Caco-2 (cell line): ENCODE measurements at regions of chr2 and their contacts with region 1.

Region 1: DNA sequence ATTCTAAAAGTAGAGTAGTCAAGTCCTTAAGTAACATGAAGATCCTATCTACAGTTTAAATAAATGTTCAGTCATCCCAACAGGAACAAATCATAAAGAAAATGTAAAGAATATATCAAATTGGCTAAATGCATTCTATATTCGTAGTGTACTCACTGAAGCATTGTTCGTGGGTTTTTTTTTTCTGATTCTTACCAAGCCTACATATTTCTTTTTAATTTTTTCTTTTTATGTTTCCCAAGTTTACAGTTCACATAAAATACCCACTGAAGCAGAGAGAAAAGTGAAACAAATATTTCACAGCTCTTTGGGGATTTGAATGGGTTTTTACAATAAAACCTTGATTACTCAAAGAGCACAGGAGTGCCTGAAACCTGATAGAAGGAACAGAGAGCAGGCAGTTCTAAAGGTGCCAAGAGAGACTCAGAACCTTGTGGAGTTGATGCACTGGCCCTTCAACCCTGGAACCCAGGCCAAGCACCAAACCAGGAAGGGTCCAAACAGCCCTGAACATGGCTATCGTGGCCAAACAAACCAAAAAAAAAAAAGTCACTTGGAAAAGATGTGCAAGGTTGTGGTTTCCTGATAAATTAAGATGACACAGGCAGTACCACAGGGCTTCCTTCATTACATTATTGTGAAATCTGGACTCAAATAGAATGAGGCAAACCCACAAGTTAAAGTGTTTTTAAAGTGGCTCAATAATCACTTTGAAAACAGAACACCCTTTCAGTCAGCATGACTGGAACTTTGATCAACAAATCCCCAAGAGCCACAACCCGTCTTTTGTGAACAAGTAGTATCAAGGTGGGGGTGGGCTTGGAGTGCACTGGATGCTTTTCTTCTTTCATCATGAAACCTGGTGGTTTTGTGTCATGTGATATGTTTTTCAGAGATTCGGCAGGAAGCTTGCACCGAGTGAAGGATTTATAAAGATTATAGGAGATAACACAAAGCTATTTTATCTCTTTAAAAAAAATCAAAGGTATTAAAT is 245.0 kb upstream of the FN1 start:
- DNase-seq: peak; percentile 85 to 92
- H3K4me3 ChIP-seq: no peak overlapping the region
- H3K4me3 Mint-ChIP-seq: peak overlapping the region; percentile 48
- H3K27ac Mint-ChIP-seq: peak overlapping the region; percentile 93
- H3K4me1 ChIP-seq: peaks cover 61% of the 10 kb centered on the region
- H3K4me1 Mint-ChIP-seq: peaks cover 56% of the 10 kb centered on the region
- H3K27me3 ChIP-seq: no peaks in the 10 kb centered on the region
- H3K27me3 Mint-ChIP-seq: no peaks in the 10 kb centered on the region
- CTCF ChIP-seq: no peak

Region 2: DNA sequence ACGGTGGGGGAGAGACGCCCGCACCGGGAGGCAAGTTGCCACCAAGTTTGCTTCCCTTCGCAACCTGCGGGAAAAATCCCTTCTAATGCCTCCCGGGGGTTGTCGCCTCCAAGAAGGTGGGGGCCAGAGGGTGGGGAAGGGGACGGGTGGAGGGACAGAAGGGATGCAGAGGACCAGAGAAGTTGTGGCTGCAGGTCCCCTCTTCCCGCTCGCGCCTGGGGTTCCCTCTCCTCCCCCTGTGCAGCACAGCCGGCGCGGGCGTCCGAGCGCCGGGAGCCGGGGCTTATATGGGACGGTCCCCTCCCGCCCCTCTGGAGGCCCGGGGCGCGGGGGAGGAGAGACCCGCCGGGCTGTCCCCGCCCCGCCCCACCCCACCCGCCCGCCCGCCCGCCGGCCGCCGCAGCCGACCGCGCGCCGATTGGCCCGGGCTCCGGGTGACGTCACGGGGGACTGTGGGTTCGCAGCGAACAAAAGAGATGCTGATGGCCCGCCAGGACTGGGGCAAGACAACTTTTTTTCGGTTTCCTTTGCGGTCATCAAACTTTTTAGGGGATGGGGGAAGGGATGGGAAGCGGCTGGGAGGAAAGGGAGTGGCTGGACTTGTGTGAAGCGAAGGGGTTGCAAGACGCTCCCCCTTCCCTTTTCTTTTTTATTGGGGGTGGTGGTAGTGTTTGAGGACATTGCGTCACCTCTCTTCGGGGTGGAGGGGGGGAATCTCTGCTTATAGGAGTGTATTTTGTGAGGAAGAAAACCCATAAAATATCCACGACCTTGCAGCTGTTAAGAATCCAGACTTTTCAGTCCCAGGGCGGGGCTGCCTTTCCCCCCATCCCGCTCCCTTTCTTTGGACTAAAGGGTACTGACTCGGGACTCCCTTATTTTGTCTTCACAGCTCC is 244.8 kb before region 1 on chr2 and contains the start of gene FN1:
- CTCF ChIA-PET with region 1: no interaction called
- POLR2A ChIA-PET with region 1: no interaction called
- intact Hi-C with region 1: loop called (anchors 1 kb)
- DNase-seq: peak; percentile 95 to 96
- H3K4me3 ChIP-seq: peak within 1 kb of the TSS; percentile 99
- H3K4me3 Mint-ChIP-seq: peak within 1 kb of the TSS; percentile 84
- H3K27ac Mint-ChIP-seq: peak within 1 kb of the TSS; percentile 94
- H3K4me1 ChIP-seq: peaks cover 40% of the 10 kb centered on the region
- H3K4me1 Mint-ChIP-seq: peaks cover 26% of the 10 kb centered on the region
- H3K27me3 ChIP-seq: no peaks in the 10 kb centered on the region
- H3K27me3 Mint-ChIP-seq: no peaks in the 10 kb centered on the region
- CTCF ChIP-seq: no peak
- total RNA-seq, gene FN1: 3,805 and 3,872 TPM in 2 replicates

Region 3: DNA sequence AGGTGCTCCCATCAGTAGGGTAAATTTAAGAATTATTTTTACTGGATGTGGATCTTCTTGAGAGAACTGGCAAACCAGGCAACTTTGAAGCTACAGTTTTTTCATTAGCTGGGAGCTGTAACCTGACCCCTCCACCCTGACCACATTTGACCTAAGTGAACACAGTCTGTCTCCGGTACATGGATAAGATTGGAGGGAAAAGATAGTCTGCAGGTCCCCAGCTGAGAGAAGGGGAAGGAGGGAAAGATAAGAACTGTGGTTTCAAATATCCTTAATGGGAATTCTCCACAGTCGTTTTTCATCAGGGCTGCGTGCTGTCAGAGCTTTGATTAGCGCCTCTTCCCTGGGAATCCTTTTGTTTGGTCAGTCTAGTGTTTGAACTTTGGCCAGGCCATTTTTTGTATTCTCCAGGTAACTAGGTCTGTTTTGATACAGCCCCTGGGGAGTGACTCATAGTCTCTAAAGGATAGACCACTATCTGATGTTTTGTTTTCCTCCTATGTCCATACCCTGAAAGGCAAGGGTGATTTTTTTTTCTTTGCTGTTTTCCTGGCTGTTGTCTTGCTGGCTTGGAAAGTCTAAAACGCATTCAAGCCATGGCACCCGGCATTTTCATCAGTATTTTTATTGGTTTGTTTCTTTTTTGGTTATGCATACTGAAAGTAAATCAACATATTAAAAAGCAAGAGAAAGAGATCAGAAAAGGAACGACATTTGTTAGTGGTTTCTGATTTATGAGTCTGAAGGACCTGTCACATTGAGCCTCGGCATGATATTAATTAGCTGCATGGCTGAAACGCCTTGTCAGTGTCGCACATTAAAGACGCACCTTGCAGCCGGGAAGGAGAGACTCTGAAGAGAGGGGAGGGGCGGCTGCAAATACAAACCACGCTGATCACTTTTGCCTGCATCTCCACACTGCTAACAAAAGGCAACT is 61.6 kb before region 1 on chr2:
- CTCF ChIA-PET with region 1: no interaction called
- POLR2A ChIA-PET with region 1: no interaction called
- intact Hi-C with region 1: loop called (anchors 1 kb)
- DNase-seq: peak; percentile 89 to 94
- H3K4me3 ChIP-seq: peak overlapping the region; percentile 10; the same call in 1 of the 2 replicates
- H3K4me3 Mint-ChIP-seq: peak overlapping the region; percentile 68
- H3K27ac Mint-ChIP-seq: peak overlapping the region; percentile 95
- H3K4me1 ChIP-seq: peaks cover 58% of the 10 kb centered on the region
- H3K4me1 Mint-ChIP-seq: peaks cover 50% of the 10 kb centered on the region
- H3K27me3 ChIP-seq: no peaks in the 10 kb centered on the region
- H3K27me3 Mint-ChIP-seq: no peaks in the 10 kb centered on the region
- CTCF ChIP-seq: no peak

Region 4: DNA sequence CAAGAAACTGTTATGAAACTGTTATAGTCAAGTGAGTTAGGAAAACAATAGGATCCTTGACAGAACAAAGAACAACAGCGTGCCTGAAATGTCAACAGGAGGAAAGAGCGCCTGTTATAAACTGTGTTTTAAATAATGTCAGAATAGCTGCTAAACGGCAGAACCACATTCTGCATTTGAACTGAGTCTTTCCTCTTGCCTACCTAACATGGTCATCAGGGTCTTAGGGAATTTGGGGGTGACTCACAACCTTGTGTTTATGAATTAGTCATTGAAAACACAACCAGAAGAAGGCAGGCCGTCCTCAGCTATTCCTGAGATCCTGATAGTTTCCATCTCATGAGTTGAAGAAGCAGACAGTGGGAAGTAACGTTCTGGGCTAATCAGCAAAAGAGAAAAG is 23.1 kb before region 1 on chr2:
- CTCF ChIA-PET with region 1: no interaction called
- POLR2A ChIA-PET with region 1: no interaction called
- intact Hi-C with region 1: no loop called
- DNase-seq: no peak
- H3K4me3 ChIP-seq: no peak overlapping the region
- H3K4me3 Mint-ChIP-seq: no peak overlapping the region
- H3K27ac Mint-ChIP-seq: no peak overlapping the region
- H3K4me1 ChIP-seq: no peaks in the 10 kb centered on the region; the same call in 1 of the 2 replicates
- H3K4me1 Mint-ChIP-seq: peaks cover 14% of the 10 kb centered on the region
- H3K27me3 ChIP-seq: no peaks in the 10 kb centered on the region
- H3K27me3 Mint-ChIP-seq: no peaks in the 10 kb centered on the region
- CTCF ChIP-seq: no peak

Region 5: DNA sequence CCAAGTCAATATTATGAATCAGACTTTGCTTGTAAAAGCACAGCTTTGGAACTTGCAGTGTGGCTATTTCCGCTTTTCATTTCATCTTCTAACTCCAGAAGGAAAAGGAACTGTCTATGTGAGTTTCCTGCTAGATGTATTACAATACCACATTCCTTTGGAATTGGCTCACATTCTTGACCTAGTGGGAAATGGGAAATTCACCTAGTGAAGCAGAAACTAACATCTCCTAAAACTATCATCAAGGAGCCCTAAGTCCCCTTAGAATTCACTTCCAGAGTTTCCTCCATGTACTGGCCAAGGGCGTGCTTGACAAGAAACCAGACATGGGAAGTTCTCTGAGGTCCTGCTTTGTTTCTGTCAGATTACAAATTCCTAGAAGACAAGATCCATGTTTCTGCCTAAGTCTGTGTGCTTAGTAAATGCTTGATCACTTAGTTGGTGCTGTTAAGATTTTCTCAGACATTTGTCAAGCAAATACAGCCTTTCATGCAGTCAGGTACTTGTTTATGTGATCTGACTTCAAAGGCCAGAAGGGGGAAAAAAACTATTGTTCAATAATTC is 30.7 kb after region 1 on chr2:
- CTCF ChIA-PET with region 1: no interaction called
- POLR2A ChIA-PET with region 1: interaction called, 5 read pairs
- intact Hi-C with region 1: loop called (anchors 1 kb)
- DNase-seq: peak in 1 of 2 experiments; percentile 62
- H3K4me3 ChIP-seq: no peak overlapping the region
- H3K4me3 Mint-ChIP-seq: no peak overlapping the region
- H3K27ac Mint-ChIP-seq: peak overlapping the region; percentile 74
- H3K4me1 ChIP-seq: peaks cover 75% of the 10 kb centered on the region
- H3K4me1 Mint-ChIP-seq: peaks cover 53% of the 10 kb centered on the region
- H3K27me3 ChIP-seq: no peaks in the 10 kb centered on the region
- H3K27me3 Mint-ChIP-seq: no peaks in the 10 kb centered on the region
- CTCF ChIP-seq: no peak

Region 6: GRCh38 chr2:215793747-215794595 is 113.1 kb after region 1 on chr2:
- CTCF ChIA-PET with region 1: interaction called, 3 read pairs
- POLR2A ChIA-PET with region 1: no interaction called
- intact Hi-C with region 1: loop called (anchors 1 kb)
- DNase-seq: peak in 1 of 2 experiments; percentile 62
- H3K4me3 ChIP-seq: no peak overlapping the region
- H3K4me3 Mint-ChIP-seq: no peak overlapping the region
- H3K27ac Mint-ChIP-seq: peak overlapping the region; percentile 81
- H3K4me1 ChIP-seq: peaks cover 41% of the 10 kb centered on the region
- H3K4me1 Mint-ChIP-seq: peaks cover 48% of the 10 kb centered on the region
- H3K27me3 ChIP-seq: no peaks in the 10 kb centered on the region
- H3K27me3 Mint-ChIP-seq: no peaks in the 10 kb centered on the region
- CTCF ChIP-seq: no peak

Region 7: DNA sequence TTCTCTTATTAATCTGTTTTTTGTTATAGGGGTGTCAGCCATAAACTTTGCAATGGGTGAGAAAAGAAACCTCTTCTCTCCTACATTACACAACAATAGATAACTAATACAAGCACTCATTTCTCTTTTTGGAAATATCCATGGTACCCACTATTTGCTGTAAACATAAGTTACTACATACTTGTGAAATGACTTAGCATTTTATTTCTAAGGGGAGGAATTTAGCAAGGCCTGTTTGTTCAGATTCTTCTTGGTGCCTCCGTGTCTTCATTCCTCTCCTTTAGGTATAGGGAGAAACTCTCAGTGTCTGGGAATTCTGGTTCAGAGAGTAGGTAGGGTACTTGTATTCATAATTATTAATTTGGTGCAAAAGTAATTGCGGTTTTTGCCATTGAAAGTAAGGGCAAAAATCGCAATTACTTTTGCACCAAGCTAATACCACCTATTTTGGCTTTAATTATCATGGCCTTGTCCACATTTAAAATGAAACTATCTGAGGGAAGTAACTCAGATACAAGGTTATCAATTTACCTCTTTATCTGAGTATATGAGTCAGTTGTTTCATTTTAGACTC is 197.7 kb after region 1 on chr2:
- CTCF ChIA-PET with region 1: no interaction called
- POLR2A ChIA-PET with region 1: no interaction called
- intact Hi-C with region 1: loop called (anchors 2 kb)
- DNase-seq: peak in 1 of 2 experiments; percentile 39
- H3K4me3 ChIP-seq: no peak overlapping the region
- H3K4me3 Mint-ChIP-seq: no peak overlapping the region
- H3K27ac Mint-ChIP-seq: peak overlapping the region; percentile 74
- H3K4me1 ChIP-seq: peaks cover 40% of the 10 kb centered on the region
- H3K4me1 Mint-ChIP-seq: peaks cover 28% of the 10 kb centered on the region
- H3K27me3 ChIP-seq: no peaks in the 10 kb centered on the region
- H3K27me3 Mint-ChIP-seq: no peaks in the 10 kb centered on the region
- CTCF ChIP-seq: no peak